CD4-positive, alpha-beta memory T cell (primary cell): ENCODE measurements at regions of chr19 and their contacts with region 1.

Region 1: GRCh38 chr19:10717356-10718204 is at the start of gene DNM2:
- DNase-seq: peak; percentile 97 to 100 (median 99)
- H3K4me3 ChIP-seq: peak within 1 kb of the TSS; percentile 65 to 86
- H3K4me3 Mint-ChIP-seq: peak within 1 kb of the TSS; percentile 92 to 97 (median 95)
- H3K27ac ChIP-seq: peak within 1 kb of the TSS; percentile 80
- H3K27ac Mint-ChIP-seq: peak within 1 kb of the TSS; percentile 88 to 97 (median 92)
- H3K4me1 ChIP-seq: peaks cover 44% of the 10 kb centered on the region
- H3K4me1 Mint-ChIP-seq: peaks cover 17 to 51% (median 37%) of the 10 kb centered on the region in 4 donors
- H3K27me3 ChIP-seq: no peaks in the 10 kb centered on the region
- H3K27me3 Mint-ChIP-seq: no peaks in the 10 kb centered on the region
- total RNA-seq, gene DNM2: 245 to 272 TPM

Region 2: DNA sequence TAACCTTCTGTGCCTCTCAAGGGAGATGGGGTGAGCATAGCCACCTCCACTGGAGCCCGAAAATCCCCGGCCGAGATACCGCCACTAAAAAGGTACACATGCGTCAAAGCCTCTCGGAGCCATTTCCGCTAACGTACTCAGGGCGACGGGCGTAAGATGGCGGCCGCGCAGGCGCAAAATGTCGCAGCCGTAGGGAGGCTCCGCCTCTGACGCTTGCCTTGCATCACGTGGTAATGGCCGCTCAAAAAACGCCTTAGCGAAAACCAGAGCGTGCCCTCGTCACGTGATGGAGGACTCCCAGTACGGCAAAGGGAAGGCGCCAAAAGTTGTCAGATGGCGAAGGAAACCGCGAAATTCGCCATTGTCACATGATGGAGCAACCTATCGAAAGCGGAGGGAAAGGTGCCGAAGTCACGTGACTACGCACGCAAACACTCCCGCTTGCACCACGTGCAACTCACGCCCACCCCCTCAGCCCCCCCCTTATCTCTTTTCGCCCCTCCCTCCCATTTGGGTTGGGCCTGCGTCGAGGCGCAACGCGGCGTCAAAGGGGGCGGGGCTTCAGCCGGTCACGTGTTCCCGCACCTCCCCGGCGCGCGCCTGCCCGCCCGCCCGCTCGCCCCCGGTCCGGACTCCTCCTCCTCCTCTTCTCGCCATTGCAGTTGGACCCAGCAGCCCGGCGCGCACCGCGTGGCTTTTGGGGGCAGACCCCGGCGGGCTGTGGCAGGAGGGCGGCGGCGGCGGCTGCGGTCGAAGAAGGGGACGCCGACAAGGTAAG is 63.7 kb before region 1 on chr19 and contains the start of gene ILF3:
- CTCF ChIA-PET with region 1: no interaction called
- POLR2A ChIA-PET with region 1: interaction called, 7 read pairs
- intact Hi-C with region 1: loop called (anchors 1 kb)
- DNase-seq: peak; percentile 100
- H3K4me3 ChIP-seq: peak within 1 kb of the TSS; percentile 92 to 94
- H3K4me3 Mint-ChIP-seq: peak within 1 kb of the TSS; percentile 93 to 98 (median 96)
- H3K27ac ChIP-seq: peak within 1 kb of the TSS; percentile 100
- H3K27ac Mint-ChIP-seq: peak within 1 kb of the TSS; percentile 98 to 100 (median 99)
- H3K4me1 ChIP-seq: peaks cover 57% of the 10 kb centered on the region
- H3K4me1 Mint-ChIP-seq: peaks cover 24 to 58% (median 39%) of the 10 kb centered on the region in 4 donors
- H3K27me3 ChIP-seq: no peaks in the 10 kb centered on the region
- H3K27me3 Mint-ChIP-seq: peaks cover 0 to 4% of the 10 kb centered on the region in 2 donors
- total RNA-seq, gene ILF3: 291 to 302 TPM

Region 3: DNA sequence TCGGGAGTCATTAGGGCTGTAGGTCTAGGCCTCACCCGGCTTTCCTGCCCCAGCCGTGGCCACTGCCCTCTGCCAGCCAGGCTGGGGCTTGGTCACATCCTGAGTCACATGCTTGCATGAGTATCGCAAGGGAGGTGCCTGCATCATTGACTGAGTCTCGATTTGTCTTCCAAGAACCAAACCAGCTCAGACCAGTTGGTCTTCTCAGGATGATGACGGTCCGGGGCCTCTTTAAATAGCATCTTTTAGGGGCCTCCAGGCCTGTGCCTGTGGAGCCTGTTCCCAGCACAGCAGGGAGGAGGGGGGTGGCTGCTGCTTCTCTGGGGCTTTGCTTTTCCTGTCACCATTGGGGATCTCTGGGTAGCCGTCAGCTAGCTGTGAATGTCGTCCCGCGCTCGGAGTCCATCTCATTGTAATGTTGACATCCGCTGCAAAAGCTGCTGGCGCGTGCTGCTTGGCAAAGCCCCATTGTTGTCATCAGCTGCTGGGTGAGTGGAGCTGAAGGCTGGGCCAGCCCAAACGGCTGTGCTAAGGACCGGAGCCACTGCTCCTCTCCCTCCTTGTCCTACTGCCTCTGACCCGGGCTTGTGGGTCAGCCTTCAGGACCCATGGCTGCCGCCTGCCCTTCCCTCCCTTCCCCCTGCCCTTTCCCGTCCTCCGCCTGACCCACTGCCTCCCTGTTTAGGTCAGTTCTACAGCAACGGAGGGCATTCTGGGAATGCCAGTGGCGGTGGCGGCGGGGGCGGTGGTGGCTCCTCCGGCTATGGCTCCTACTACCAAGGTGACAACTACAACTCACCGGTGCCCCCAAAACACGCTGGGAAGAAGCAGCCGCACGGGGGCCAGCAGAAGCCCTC is 30.7 kb before region 1 on chr19:
- CTCF ChIA-PET with region 1: no interaction called
- POLR2A ChIA-PET with region 1: no interaction called
- intact Hi-C with region 1: no loop called
- DNase-seq: no peak
- H3K4me3 ChIP-seq: no peak overlapping the region
- H3K4me3 Mint-ChIP-seq: no peak overlapping the region
- H3K27ac ChIP-seq: no peak overlapping the region
- H3K27ac Mint-ChIP-seq: peak overlapping the region in 1 of 7 donors; percentile 42
- H3K4me1 ChIP-seq: no peaks in the 10 kb centered on the region
- H3K4me1 Mint-ChIP-seq: peaks cover 0 to 5% (median 3%) of the 10 kb centered on the region in 4 donors
- H3K27me3 ChIP-seq: no peaks in the 10 kb centered on the region
- H3K27me3 Mint-ChIP-seq: no peaks in the 10 kb centered on the region

Region 4: DNA sequence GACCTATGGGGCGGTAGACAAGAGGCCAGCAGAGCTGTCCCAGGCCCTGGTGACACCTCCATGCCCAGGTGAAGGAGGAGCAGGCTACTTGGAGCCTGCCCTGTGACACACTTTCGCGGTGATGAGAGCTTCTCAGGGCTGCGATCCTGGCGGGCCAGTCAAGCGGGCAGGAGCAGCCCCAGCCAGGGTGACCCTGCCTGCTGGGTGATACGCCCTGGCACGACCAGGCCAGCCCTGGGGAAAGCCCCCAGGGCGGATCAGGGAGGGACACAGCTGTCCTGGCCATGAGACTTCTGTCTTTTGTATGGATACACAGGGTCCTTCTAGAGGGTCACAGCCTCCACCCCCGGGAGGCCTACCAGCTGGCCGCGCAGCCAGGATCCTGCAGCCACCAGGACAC is 13.3 kb after region 1 on chr19:
- CTCF ChIA-PET with region 1: interaction called, 4 read pairs
- POLR2A ChIA-PET with region 1: interaction called, 7 read pairs
- intact Hi-C with region 1: loop called (anchors 1 kb)
- DNase-seq: no peak
- H3K4me3 ChIP-seq: no peak overlapping the region
- H3K4me3 Mint-ChIP-seq: peak overlapping the region in 4 of 8 donors; percentile 4 to 85 (median 47)
- H3K27ac ChIP-seq: peak overlapping the region; percentile 39
- H3K27ac Mint-ChIP-seq: peak overlapping the region; percentile 85 to 100 (median 95)
- H3K4me1 ChIP-seq: peaks cover 59% of the 10 kb centered on the region
- H3K4me1 Mint-ChIP-seq: peaks cover 25 to 60% (median 40%) of the 10 kb centered on the region in 4 donors
- H3K27me3 ChIP-seq: no peaks in the 10 kb centered on the region
- H3K27me3 Mint-ChIP-seq: no peaks in the 10 kb centered on the region

Region 5: GRCh38 chr19:10748924-10749434 is 31.4 kb after region 1 on chr19:
- CTCF ChIA-PET with region 1: no interaction called
- POLR2A ChIA-PET with region 1: no interaction called
- intact Hi-C with region 1: no loop called
- DNase-seq: no peak
- H3K4me3 ChIP-seq: no peak overlapping the region
- H3K4me3 Mint-ChIP-seq: peak overlapping the region in 1 of 8 donors; percentile 25
- H3K27ac ChIP-seq: peak overlapping the region; percentile 5
- H3K27ac Mint-ChIP-seq: peak overlapping the region; percentile 52 to 85 (median 70)
- H3K4me1 ChIP-seq: peaks cover 76% of the 10 kb centered on the region
- H3K4me1 Mint-ChIP-seq: peaks cover 30 to 90% (median 60%) of the 10 kb centered on the region in 4 donors
- H3K27me3 ChIP-seq: no peaks in the 10 kb centered on the region
- H3K27me3 Mint-ChIP-seq: no peaks in the 10 kb centered on the region

Region 6: GRCh38 chr19:10769533-10770491 is 52.2 kb after region 1 on chr19:
- CTCF ChIA-PET with region 1: interaction called, 23 read pairs
- POLR2A ChIA-PET with region 1: interaction called, 99 read pairs
- intact Hi-C with region 1: loop called (anchors 1 kb)
- DNase-seq: peak in 3 of 5 donors; percentile 12 to 28 (median 20)
- H3K4me3 ChIP-seq: no peak overlapping the region
- H3K4me3 Mint-ChIP-seq: no peak overlapping the region
- H3K27ac ChIP-seq: no peak overlapping the region
- H3K27ac Mint-ChIP-seq: peak overlapping the region; percentile 29 to 90 (median 60)
- H3K4me1 ChIP-seq: peaks cover 37% of the 10 kb centered on the region
- H3K4me1 Mint-ChIP-seq: peaks cover 10 to 52% (median 20%) of the 10 kb centered on the region in 4 donors
- H3K27me3 ChIP-seq: no peaks in the 10 kb centered on the region
- H3K27me3 Mint-ChIP-seq: no peaks in the 10 kb centered on the region

Region 7: DNA sequence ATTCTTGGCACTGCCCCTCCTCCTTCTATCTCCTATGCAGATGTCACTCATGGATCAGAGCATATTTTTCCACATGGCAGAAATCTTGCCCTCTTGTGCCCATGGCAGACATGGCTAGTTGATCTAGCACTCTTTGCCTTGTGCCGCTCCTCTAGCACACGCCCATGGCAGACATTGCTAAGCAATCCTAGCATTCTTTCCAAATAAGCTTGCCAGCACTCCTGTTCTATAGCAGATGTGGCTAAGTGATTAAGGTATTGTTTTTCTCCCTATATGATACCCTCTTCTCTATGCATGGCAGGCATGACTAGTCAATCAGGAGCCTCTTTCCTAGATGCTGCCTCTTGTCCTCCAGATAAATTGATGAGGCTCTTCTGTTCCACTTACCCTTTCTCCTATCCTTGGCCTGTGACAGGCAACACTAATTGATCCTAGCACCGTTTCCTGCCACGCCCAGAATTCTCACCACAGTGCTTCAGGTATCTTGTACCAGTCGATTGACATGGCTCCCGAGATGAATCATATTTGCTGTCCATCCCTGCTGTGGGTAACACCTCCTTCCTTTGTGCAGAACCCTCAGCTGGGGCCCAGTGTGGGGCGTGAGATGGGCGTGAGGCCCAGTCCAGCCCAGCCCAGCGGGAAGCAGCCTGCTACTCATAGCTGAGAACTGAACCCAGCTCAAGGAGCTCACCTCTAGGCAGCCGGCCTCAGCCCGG is 91.5 kb after region 1 on chr19:
- CTCF ChIA-PET with region 1: interaction called, 4 read pairs
- POLR2A ChIA-PET with region 1: interaction called, 10 read pairs
- intact Hi-C with region 1: no loop called
- DNase-seq: peak; percentile 29 to 73 (median 37)
- H3K4me3 ChIP-seq: no peak overlapping the region
- H3K4me3 Mint-ChIP-seq: peak overlapping the region in 5 of 8 donors; percentile 36 to 57 (median 55)
- H3K27ac ChIP-seq: peak overlapping the region; percentile 24
- H3K27ac Mint-ChIP-seq: peak overlapping the region; percentile 48 to 94 (median 72)
- H3K4me1 ChIP-seq: peaks cover 17% of the 10 kb centered on the region
- H3K4me1 Mint-ChIP-seq: peaks cover 15 to 38% (median 22%) of the 10 kb centered on the region in 4 donors
- H3K27me3 ChIP-seq: no peaks in the 10 kb centered on the region
- H3K27me3 Mint-ChIP-seq: no peaks in the 10 kb centered on the region

Region 8: GRCh38 chr19:10835754-10836477 is 118.3 kb after region 1 on chr19 and contains the start of gene TMED1:
- CTCF ChIA-PET with region 1: interaction called, 12 read pairs
- POLR2A ChIA-PET with region 1: interaction called, 46 read pairs
- intact Hi-C with region 1: loop called (anchors 1 kb)
- DNase-seq: peak; percentile 94 to 95 (median 94)
- H3K4me3 ChIP-seq: peak within 1 kb of the TSS; percentile 64 to 89
- H3K4me3 Mint-ChIP-seq: peak within 1 kb of the TSS; percentile 96 to 100 (median 98)
- H3K27ac ChIP-seq: peak within 1 kb of the TSS; percentile 95
- H3K27ac Mint-ChIP-seq: peak within 1 kb of the TSS; percentile 99 to 100 (median 100)
- H3K4me1 ChIP-seq: peaks cover 17% of the 10 kb centered on the region
- H3K4me1 Mint-ChIP-seq: peaks cover 9 to 21% (median 13%) of the 10 kb centered on the region in 4 donors
- H3K27me3 ChIP-seq: no peaks in the 10 kb centered on the region
- H3K27me3 Mint-ChIP-seq: no peaks in the 10 kb centered on the region
- total RNA-seq, gene TMED1: 9.0 to 10.9 TPM

Region 9: DNA sequence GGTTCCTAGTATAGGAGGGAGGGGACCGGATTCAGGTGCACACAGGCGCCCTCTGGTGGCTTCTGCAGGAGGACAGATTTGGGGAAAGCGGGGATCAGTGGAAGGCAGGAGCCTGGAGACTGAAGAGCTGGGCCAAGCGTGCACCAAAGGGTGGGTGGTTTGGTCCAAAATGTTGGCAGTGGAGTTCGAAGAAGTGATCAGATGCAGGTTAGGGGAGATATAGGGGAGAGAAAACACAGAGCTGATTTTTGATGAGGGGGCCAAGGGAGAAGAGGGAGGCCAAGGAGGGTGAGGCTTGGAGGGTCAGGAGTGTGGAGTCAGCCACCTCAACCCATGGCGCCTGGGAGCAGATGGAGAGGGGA is 146.9 kb after region 1 on chr19:
- CTCF ChIA-PET with region 1: interaction called, 186 read pairs
- POLR2A ChIA-PET with region 1: interaction called, 49 read pairs
- intact Hi-C with region 1: loop called (anchors 1 kb)
- DNase-seq: peak; percentile 72 to 76 (median 74)
- H3K4me3 ChIP-seq: no peak overlapping the region
- H3K4me3 Mint-ChIP-seq: peak overlapping the region in 3 of 8 donors; percentile 41 to 64 (median 59)
- H3K27ac ChIP-seq: no peak overlapping the region
- H3K27ac Mint-ChIP-seq: peak overlapping the region in 6 of 7 donors; percentile 3 to 87 (median 45)
- H3K4me1 ChIP-seq: peaks cover 9% of the 10 kb centered on the region
- H3K4me1 Mint-ChIP-seq: peaks cover 5 to 19% (median 14%) of the 10 kb centered on the region in 4 donors
- H3K27me3 ChIP-seq: no peaks in the 10 kb centered on the region
- H3K27me3 Mint-ChIP-seq: no peaks in the 10 kb centered on the region